ENCODE measurements at regions of chr17 and their contacts with region 1.

Region 1: GRCh38 chr17:76014184-76014924 is 12.8 kb downstream of the EVPL start:
- DNase-seq: peak; percentile 61
- H3K4me3 ChIP-seq: no peak overlapping the region
- H3K27ac ChIP-seq: no peak overlapping the region
- H3K4me1 ChIP-seq: peaks cover 9% of the 10 kb centered on the region
- H3K27me3 ChIP-seq: no peaks in the 10 kb centered on the region
- CTCF ChIP-seq: peak; percentile 95 to 99

Region 2: GRCh38 chr17:76053246-76054116 is 39.1 kb after region 1 on chr17:
- CTCF ChIA-PET with region 1: no interaction called
- dilution Hi-C with region 1: no loop called
- in situ Hi-C with region 1: no loop called
- intact Hi-C with region 1: loop called (anchors 2 kb)
- DNase-seq: peak; percentile 44
- H3K4me3 ChIP-seq: no peak overlapping the region
- H3K27ac ChIP-seq: peak overlapping the region; percentile 35
- H3K4me1 ChIP-seq: peaks cover 17% of the 10 kb centered on the region
- H3K27me3 ChIP-seq: no peaks in the 10 kb centered on the region
- CTCF ChIP-seq: no peak

Region 3: GRCh38 chr17:76103274-76104139 is 89.2 kb after region 1 on chr17 and contains the start of gene EXOC7:
- CTCF ChIA-PET with region 1: no interaction called
- dilution Hi-C with region 1: no loop called
- in situ Hi-C with region 1: no loop called
- intact Hi-C with region 1: loop called (anchors 2 kb)
- DNase-seq: peak; percentile 83
- H3K4me3 ChIP-seq: peak within 1 kb of the TSS; percentile 46 to 80 (median 73)
- H3K27ac ChIP-seq: peak within 1 kb of the TSS; percentile 45
- H3K4me1 ChIP-seq: peaks cover 9% of the 10 kb centered on the region
- H3K27me3 ChIP-seq: no peaks in the 10 kb centered on the region
- CTCF ChIP-seq: peak in 1 of 2 donors; percentile 33
- total RNA-seq, gene EXOC7: 102 to 111 TPM

Region 4: GRCh38 chr17:76182016-76182764 is 167.8 kb after region 1 on chr17:
- CTCF ChIA-PET with region 1: no interaction called
- dilution Hi-C with region 1: no loop called
- in situ Hi-C with region 1: no loop called
- intact Hi-C with region 1: loop called (anchors 1 kb)
- DNase-seq: peak; percentile 82
- H3K4me3 ChIP-seq: no peak overlapping the region
- H3K27ac ChIP-seq: no peak overlapping the region
- H3K4me1 ChIP-seq: no peaks in the 10 kb centered on the region
- H3K27me3 ChIP-seq: no peaks in the 10 kb centered on the region
- CTCF ChIP-seq: peak; percentile 91 to 97

Region 5: GRCh38 chr17:76296186-76296585 is 281.8 kb after region 1 on chr17:
- CTCF ChIA-PET with region 1: no interaction called
- dilution Hi-C with region 1: no loop called
- in situ Hi-C with region 1: loop called in 1 of 2 experiments (anchors 5 kb)
- intact Hi-C with region 1: no loop called
- DNase-seq: no peak
- H3K4me3 ChIP-seq: no peak overlapping the region
- H3K27ac ChIP-seq: no peak overlapping the region
- H3K4me1 ChIP-seq: no peaks in the 10 kb centered on the region
- H3K27me3 ChIP-seq: no peaks in the 10 kb centered on the region
- CTCF ChIP-seq: no peak

Measured in mammary epithelial cell (primary cell).